Mammary epithelial cell (primary cell): ENCODE measurements at regions of chr1 and their contacts with region 1.

Region 1: DNA sequence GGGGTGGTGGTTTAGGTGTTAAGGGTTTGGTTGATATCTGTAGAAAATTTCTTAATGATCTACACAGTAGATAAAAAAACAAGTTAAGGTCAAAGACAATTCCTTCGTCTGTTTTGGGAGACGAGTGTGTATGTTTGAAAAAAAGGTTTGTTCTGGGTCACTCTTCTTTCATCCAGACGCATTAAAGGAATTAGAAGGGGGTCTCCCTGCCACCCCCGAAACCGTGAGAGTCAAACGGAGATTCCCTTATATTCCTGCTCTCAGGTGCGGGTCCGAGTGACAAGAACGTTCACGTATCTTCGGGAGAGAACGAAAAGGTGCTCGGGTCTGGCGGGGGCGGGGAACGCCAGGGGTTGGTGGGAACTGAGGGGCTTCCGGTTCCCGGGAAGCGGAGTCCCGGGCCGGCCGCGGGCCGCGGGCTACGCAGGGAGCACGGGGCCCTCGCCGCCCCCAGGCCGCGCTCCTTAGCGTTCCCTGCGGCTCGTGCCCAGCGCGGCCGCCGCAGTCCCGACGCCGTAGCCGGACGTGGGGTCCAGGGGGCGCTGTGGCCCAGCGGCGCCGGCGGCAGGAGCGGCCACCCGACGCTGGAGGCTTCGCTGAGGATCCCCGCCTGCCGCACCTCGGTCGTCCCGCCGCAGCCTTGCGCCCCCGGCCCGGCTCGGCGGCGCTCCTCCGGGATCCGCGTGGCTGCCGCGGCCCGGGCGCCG is at the start of gene ZFYVE9:
- DNase-seq: peak; percentile 76
- H3K4me3 ChIP-seq: peak within 1 kb of the TSS; percentile 84 to 95 (median 94)
- H3K27ac ChIP-seq: peak within 1 kb of the TSS; percentile 95
- H3K4me1 ChIP-seq: peaks cover 33% of the 10 kb centered on the region
- H3K27me3 ChIP-seq: no peaks in the 10 kb centered on the region
- CTCF ChIP-seq: peak; percentile 61 to 65
- total RNA-seq, gene ZFYVE9: 35.4 to 42.0 TPM

Region 2: DNA sequence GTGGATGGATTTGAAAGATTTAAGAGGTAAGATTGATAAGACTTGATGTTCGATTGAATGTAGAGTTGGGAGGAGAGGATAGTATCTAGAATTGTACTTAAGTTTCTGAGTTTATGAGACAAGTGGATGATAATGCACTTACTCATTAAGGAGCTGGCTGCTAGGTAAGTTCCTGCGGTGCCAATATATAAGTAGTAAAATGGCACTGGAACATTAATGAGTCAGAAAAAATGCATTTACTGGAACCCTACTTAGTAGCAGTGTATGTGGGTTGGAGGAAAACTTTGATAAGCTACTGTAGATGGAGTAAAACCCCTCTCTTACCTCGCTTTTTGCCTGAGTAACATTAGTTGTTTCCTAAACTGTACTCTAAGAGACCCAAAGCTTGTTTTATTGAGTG is 68.4 kb after region 1 on chr1:
- CTCF ChIA-PET with region 1: interaction called, 5 read pairs
- dilution Hi-C with region 1: no loop called
- in situ Hi-C with region 1: no loop called
- intact Hi-C with region 1: loop called (anchors 2 kb)
- DNase-seq: peak; percentile 82
- H3K4me3 ChIP-seq: peak overlapping the region in 1 of 3 experiments; percentile 2
- H3K27ac ChIP-seq: peak overlapping the region; percentile 97
- H3K4me1 ChIP-seq: peaks cover 22% of the 10 kb centered on the region
- H3K27me3 ChIP-seq: no peaks in the 10 kb centered on the region
- CTCF ChIP-seq: no peak

Region 3: DNA sequence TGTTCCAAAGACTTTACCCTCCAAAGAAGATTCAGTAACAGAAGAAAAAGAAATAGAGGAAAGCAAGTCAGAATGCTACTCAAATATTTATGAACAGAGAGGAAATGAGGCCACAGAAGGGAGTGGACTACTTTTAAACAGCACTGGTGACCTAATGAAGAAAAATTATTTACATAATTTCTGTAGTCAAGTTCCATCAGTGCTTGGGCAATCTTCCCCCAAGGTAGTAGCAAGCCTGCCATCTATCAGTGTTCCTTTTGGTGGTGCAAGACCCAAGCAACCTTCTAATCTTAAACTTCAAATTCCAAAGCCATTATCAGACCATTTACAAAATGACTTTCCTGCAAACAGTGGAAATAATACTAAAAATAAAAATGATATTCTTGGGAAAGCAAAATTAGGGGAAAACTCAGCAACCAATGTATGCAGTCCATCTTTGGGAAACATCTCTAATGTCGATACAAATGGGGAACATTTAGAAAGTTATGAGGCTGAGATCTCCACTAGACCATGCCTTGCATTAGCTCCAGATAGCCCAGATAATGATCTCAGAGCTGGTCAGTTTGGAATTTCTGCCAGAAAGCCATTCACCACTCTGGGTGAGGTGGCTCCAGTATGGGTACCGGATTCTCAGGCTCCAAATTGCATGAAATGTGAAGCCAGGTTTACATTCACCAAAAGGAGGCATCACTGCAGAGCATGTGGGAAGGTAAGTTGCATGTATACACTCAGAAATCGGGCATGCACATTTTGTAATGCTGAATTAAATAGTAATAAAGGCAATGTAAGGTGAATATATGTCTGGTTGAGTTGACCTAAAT is 97.4 kb after region 1 on chr1:
- CTCF ChIA-PET with region 1: interaction called, 4 read pairs
- dilution Hi-C with region 1: no loop called
- in situ Hi-C with region 1: no loop called
- intact Hi-C with region 1: loop called (anchors 1 kb)
- DNase-seq: no peak
- H3K4me3 ChIP-seq: no peak overlapping the region
- H3K27ac ChIP-seq: peak overlapping the region; percentile 61
- H3K4me1 ChIP-seq: peaks cover 34% of the 10 kb centered on the region
- H3K27me3 ChIP-seq: no peaks in the 10 kb centered on the region
- CTCF ChIP-seq: peak in 1 of 2 donors; percentile 14

Region 4: DNA sequence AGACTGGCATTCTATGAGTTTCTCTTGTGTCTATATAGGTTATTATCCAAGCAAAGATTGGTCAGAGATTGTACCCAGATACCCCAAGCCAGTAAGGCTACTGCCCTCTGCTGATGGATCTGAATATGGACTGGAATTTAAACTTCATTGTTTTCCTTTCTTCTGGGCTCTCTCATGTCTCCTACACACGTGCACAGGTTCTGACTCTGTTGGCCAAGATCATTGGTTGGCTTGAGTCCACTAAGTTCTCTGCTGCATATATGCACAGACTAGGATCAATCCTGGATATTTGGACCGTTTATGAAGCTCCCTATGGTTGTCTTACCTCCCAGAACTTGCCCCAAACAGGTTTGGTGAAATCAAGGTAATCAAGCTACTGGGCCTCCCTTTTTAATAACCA is 154.7 kb after region 1 on chr1:
- CTCF ChIA-PET with region 1: no interaction called
- dilution Hi-C with region 1: no loop called
- in situ Hi-C with region 1: no loop called
- intact Hi-C with region 1: loop called (anchors 1 kb)
- DNase-seq: peak; percentile 59
- H3K4me3 ChIP-seq: no peak overlapping the region
- H3K27ac ChIP-seq: no peak overlapping the region
- H3K4me1 ChIP-seq: no peaks in the 10 kb centered on the region
- H3K27me3 ChIP-seq: no peaks in the 10 kb centered on the region
- CTCF ChIP-seq: peak; percentile 67 to 84